ENCODE measurements at regions of chr2 and their contacts with region 1.

Region 1: DNA sequence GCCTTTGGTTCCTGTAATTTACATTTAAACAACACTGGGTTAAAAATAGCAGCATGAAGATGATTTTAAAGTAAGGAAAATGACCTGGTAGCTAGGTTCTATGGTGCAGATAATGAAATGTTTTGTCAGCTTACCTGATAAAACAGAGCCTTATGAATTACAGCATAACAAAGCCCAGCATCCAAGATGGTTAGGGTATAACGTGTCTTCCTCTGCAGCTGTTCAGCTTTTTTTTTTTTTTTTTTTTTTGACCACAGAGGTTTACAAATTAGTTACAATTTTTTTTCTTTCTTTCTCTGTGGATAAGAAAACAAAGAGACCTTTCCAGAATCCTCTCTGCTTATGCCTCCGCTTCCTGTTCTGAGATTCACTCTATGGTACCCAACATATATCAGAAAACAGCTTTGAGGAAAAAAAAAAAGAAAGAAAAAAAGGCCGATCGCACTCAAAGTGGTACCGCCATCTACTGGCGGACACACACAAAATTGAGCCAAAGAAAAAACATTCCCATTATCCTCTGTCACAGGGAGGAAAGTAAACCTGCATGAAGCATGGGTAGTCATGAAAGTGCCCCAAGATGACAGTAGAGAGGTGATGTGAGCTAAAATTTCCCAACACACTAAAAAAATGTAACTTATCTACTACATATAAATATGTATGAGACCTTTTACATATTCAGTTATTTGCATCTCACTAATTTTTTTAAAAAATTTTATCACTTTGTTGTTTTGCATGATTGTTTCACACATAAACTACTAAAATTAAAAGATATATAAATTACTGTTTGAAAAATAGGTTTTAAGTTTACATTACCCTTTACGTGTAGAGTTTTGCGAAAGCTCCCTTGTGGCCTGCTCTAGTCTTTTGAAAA is at the start of gene SCN3A:
- H3K4me3 ChIP-seq: no peak within 1 kb of the TSS
- H3K27ac ChIP-seq: no peak within 1 kb of the TSS
- H3K4me1 ChIP-seq: no peaks in the 10 kb centered on the region
- CTCF ChIP-seq: peak; percentile 72

Region 2: DNA sequence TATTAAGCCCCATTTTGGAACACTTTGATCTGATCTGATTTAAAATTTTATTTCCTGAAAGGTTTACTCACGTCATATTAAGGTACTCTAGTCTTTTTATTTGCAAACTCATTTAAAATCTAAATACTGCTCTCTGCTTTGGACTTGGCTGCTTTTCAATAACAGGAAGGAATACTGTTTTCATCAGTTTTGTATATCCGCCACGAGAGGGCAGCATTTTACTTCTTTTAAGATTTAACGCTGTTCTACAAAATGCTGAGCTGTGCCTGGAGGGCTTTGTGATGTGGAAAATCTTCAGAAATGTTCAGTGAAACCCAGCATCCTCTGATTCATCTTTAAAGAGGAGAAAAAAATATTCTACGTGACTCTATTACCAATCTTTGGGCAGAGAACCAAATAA is 211.1 kb before region 1 on chr2:
- CTCF ChIA-PET with region 1: interaction called, 23 read pairs
- POLR2A ChIA-PET with region 1: no interaction called
- H3K4me3 ChIP-seq: no peak overlapping the region
- H3K27ac ChIP-seq: no peak overlapping the region
- H3K4me1 ChIP-seq: no peaks in the 10 kb centered on the region
- CTCF ChIP-seq: no peak

Region 3: DNA sequence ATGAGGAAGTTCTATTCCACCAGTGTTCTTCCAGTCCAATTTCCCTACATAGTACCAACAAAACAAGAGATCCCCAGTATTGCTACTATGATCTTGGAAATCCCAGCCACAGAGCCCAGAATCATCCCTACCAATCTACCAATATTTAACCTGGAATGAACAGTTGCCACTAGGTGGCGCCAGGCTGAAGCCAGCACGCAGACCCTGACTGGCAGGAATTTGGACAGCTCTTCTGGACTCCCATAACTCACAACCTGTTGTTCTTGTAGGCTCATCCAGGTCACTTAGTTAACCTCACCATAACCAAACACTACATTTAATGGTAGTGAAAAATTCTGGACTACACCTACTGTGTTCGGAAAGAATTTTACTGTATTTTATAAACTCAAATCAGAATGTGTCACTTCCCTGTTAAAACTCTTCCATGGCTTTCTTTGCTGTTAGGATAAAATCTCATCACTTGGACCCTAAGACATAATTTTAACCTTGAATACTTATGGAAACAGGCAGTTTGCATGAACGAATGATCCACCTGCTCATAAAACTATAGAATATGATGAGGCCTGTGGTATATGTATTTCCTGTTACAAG is 188.8 kb before region 1 on chr2:
- CTCF ChIA-PET with region 1: interaction called, 236 read pairs
- POLR2A ChIA-PET with region 1: no interaction called
- H3K4me3 ChIP-seq: no peak overlapping the region
- H3K27ac ChIP-seq: no peak overlapping the region
- H3K4me1 ChIP-seq: no peaks in the 10 kb centered on the region
- CTCF ChIP-seq: peak; percentile 72

Region 4: GRCh38 chr2:165161510-165161909 is 42.4 kb before region 1 on chr2:
- CTCF ChIA-PET with region 1: interaction called, 10 read pairs
- POLR2A ChIA-PET with region 1: no interaction called
- H3K4me3 ChIP-seq: no peak overlapping the region
- H3K27ac ChIP-seq: no peak overlapping the region
- H3K4me1 ChIP-seq: no peaks in the 10 kb centered on the region
- CTCF ChIP-seq: no peak

Region 5: DNA sequence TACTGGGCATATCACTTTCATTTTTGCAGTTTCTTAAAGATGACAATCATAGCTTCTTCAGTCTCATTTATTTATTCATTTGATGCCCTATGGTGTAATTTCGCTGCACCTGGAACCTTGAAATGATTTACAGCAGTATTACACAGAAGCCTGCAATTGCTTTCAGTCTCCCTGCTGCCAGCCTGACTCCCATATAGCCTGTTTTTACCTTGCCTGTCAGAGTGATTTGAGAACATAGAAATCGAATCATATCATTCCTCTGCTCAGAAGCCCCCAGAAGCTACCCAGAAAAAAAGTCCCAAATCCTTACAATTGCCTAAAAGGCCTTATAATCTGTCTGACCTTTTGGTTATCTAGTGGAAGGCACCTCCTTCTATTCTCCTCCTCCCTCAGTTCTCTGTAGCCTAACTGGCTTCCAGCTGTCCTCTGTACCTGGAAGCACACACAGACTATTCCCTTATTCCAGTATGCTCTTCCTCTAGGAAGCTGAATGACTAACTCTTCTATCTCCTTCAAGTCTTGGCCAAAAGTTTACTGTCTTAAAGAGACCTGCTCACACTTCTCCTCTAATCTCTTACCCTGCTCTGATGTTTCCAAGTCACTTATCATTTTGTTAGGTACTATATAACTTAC is 12.7 kb before region 1 on chr2:
- CTCF ChIA-PET with region 1: interaction called, 10 read pairs
- POLR2A ChIA-PET with region 1: no interaction called
- H3K4me3 ChIP-seq: no peak overlapping the region
- H3K27ac ChIP-seq: no peak overlapping the region
- H3K4me1 ChIP-seq: no peaks in the 10 kb centered on the region
- CTCF ChIP-seq: no peak

Region 6: DNA sequence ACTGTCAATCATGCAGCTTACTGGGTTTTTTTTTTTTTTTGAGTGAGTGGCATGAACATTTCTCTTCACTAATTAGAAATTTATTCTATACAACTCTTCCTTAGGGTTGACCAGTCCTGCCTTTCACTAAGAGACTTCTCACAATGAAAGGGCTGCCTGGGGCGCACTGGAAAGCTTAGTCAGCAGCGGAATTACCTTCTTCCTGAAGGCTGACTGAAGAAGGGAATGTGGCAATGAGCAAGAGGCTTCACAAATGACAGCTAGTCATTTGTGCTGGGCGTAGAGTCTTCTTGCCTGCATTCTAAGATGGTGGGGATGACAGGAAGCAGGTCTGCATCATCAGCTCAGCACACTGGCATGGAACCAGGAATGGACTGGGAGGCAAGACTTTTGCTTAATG is 15.6 kb after region 1 on chr2:
- CTCF ChIA-PET with region 1: interaction called, 19 read pairs
- POLR2A ChIA-PET with region 1: no interaction called
- H3K4me3 ChIP-seq: no peak overlapping the region
- H3K27ac ChIP-seq: no peak overlapping the region
- H3K4me1 ChIP-seq: no peaks in the 10 kb centered on the region
- CTCF ChIP-seq: no peak

Region 7: GRCh38 chr2:165307317-165307716 is 103.4 kb after region 1 on chr2:
- CTCF ChIA-PET with region 1: no interaction called
- POLR2A ChIA-PET with region 1: no interaction called
- H3K4me3 ChIP-seq: no peak overlapping the region
- H3K27ac ChIP-seq: no peak overlapping the region
- H3K4me1 ChIP-seq: no peaks in the 10 kb centered on the region
- CTCF ChIP-seq: no peak

Measured in HEK293 (cell line).